Mammary epithelial cell (primary cell): ENCODE measurements at regions of chr16 and their contacts with region 1.

Region 1: DNA sequence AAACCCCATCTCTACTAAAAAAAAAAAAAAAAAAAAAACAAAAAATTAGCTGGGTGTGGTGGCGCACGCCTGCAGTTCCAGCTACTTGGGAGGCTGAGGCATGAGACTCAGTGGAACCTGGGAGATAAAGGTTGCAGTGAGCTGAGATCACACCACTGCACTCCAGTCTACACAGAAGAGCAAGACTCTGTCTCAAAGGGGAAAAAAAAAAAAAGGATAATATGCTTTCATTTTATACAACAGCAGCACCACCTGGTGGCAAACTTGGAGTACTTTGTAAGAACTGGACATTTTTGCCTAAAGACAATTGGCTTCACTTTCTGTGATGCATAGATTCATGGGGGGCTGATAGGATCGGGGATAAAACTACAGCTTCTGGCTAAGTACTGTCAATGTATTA is 8.5 kb downstream of the CHTF8 start:
- DNase-seq: peak; percentile 56
- H3K4me3 ChIP-seq: no peak overlapping the region
- H3K27ac ChIP-seq: no peak overlapping the region
- H3K4me1 ChIP-seq: no peaks in the 10 kb centered on the region
- H3K27me3 ChIP-seq: no peaks in the 10 kb centered on the region
- CTCF ChIP-seq: peak; percentile 42 to 71

Region 2: GRCh38 chr16:68564367-68564985 is 559.4 kb before region 1 on chr16:
- CTCF ChIA-PET with region 1: no interaction called
- dilution Hi-C with region 1: no loop called
- in situ Hi-C with region 1: loop called in 1 of 2 experiments (anchors 25 kb)
- intact Hi-C with region 1: no loop called
- DNase-seq: no peak
- H3K4me3 ChIP-seq: no peak overlapping the region
- H3K27ac ChIP-seq: no peak overlapping the region
- H3K4me1 ChIP-seq: no peaks in the 10 kb centered on the region
- H3K27me3 ChIP-seq: no peaks in the 10 kb centered on the region
- CTCF ChIP-seq: no peak

Region 3: GRCh38 chr16:68704232-68704867 is 419.6 kb before region 1 on chr16:
- CTCF ChIA-PET with region 1: no interaction called
- dilution Hi-C with region 1: no loop called
- in situ Hi-C with region 1: no loop called
- intact Hi-C with region 1: loop called (anchors 5 kb)
- DNase-seq: peak; percentile 83
- H3K4me3 ChIP-seq: no peak overlapping the region
- H3K27ac ChIP-seq: no peak overlapping the region
- H3K4me1 ChIP-seq: peaks cover 22% of the 10 kb centered on the region
- H3K27me3 ChIP-seq: no peaks in the 10 kb centered on the region
- CTCF ChIP-seq: peak; percentile 84 to 92

Region 4: DNA sequence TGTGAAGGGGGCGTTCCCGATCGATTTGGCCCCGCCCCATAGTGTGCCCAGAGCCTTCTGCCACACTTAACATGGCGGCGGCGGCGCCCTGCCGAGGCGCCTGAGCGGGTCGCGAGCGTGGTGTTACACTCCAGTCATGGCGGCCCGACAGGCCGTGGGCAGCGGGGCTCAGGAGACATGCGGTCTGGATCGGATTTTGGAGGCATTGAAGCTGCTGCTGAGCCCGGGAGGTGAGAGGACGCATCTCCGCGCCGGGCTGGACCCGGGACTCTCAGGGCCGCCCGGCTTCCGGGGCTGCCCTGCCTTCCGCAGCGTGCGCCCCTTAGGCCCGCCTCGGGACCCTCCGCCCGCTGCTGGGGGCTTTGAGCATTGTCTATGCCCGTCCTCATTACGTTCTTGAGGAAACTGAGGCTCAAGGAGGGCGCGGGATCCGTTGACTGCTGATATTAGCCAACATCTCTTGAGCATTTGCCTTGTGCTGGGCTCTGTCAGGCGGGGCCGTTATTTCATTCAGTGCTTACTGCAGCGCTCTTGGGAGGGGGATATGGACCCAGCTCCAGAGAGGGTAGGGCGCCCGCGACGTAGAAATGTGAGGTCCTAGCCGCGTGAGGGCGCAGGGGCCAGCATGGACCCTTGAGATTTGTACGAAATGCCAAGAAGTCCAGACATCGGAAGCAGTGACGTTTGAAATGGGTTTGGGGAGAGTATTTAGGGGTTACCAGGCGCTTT is 280.3 kb before region 1 on chr16 and contains the start of gene TANGO6:
- CTCF ChIA-PET with region 1: interaction called, 8 read pairs
- dilution Hi-C with region 1: no loop called
- in situ Hi-C with region 1: loop called in 1 of 2 experiments (anchors 10 kb)
- intact Hi-C with region 1: loop called (anchors 1 kb)
- DNase-seq: peak; percentile 64
- H3K4me3 ChIP-seq: peak within 1 kb of the TSS; percentile 71 to 75 (median 73)
- H3K27ac ChIP-seq: peak within 1 kb of the TSS; percentile 52
- H3K4me1 ChIP-seq: peaks cover 4% of the 10 kb centered on the region
- H3K27me3 ChIP-seq: no peaks in the 10 kb centered on the region
- CTCF ChIP-seq: peak in 1 of 2 donors; percentile 20
- total RNA-seq, gene TANGO6: 18.2 to 24.5 TPM

Region 5: DNA sequence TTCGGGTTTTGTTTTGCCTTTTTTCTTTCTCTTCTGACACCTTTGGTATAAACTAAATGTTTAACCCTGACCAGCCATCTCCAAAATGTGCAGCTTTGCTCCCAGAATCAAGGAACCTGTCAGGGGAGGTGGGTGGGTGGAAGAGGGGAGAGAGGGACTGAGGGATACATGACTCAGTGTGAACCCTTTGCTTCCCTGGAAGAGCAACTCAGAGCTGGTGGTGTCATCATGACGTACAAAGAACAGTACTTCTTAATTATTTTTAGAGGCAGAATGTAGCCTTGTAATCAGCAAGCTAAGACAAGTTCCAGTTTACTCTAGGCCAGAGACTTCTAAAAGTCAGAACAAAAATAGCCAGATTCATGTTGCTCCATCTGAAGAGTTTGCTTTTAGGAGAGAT is 138.1 kb before region 1 on chr16:
- CTCF ChIA-PET with region 1: interaction called, 15 read pairs
- dilution Hi-C with region 1: no loop called
- in situ Hi-C with region 1: no loop called
- intact Hi-C with region 1: no loop called
- DNase-seq: peak; percentile 95
- H3K4me3 ChIP-seq: no peak overlapping the region
- H3K27ac ChIP-seq: peak overlapping the region; percentile 94
- H3K4me1 ChIP-seq: peaks cover 33% of the 10 kb centered on the region
- H3K27me3 ChIP-seq: no peaks in the 10 kb centered on the region
- CTCF ChIP-seq: no peak

Region 6: DNA sequence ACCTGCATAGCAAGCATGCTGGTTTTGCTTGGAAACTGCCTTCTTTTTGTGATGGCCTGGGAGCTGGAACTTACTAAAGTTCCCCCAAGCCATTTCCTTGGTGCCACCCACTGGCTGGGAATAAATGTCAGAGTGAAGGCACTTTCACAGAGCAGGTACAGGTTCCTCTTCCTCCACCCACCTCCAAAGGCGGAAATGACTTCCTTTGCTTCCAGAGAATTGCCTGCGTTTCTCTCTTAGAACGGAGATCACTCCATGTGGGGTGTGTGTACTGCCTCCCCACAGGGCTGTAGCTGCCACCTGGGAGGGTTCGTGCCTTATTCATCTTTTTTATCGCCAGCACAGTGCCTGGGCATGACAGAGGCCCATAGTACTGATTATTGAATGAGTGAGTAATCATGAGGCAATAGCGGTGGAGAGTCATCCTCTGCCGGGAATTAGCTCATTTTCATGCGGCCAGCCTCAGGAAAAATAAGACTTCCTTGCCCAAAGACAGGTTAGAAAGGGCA is 50.7 kb before region 1 on chr16:
- CTCF ChIA-PET with region 1: no interaction called
- dilution Hi-C with region 1: no loop called
- in situ Hi-C with region 1: no loop called
- intact Hi-C with region 1: no loop called
- DNase-seq: peak; percentile 98
- H3K4me3 ChIP-seq: no peak overlapping the region
- H3K27ac ChIP-seq: peak overlapping the region; percentile 79
- H3K4me1 ChIP-seq: peaks cover 35% of the 10 kb centered on the region
- H3K27me3 ChIP-seq: no peaks in the 10 kb centered on the region
- CTCF ChIP-seq: peak in 1 of 2 donors; percentile 7

Region 7: GRCh38 chr16:69089091-69089910 is 34.6 kb before region 1 on chr16:
- CTCF ChIA-PET with region 1: no interaction called
- dilution Hi-C with region 1: loop called (anchors 5 kb)
- in situ Hi-C with region 1: no loop called
- intact Hi-C with region 1: no loop called
- DNase-seq: no peak
- H3K4me3 ChIP-seq: no peak overlapping the region
- H3K27ac ChIP-seq: no peak overlapping the region
- H3K4me1 ChIP-seq: no peaks in the 10 kb centered on the region
- H3K27me3 ChIP-seq: no peaks in the 10 kb centered on the region
- CTCF ChIP-seq: no peak

Region 8: DNA sequence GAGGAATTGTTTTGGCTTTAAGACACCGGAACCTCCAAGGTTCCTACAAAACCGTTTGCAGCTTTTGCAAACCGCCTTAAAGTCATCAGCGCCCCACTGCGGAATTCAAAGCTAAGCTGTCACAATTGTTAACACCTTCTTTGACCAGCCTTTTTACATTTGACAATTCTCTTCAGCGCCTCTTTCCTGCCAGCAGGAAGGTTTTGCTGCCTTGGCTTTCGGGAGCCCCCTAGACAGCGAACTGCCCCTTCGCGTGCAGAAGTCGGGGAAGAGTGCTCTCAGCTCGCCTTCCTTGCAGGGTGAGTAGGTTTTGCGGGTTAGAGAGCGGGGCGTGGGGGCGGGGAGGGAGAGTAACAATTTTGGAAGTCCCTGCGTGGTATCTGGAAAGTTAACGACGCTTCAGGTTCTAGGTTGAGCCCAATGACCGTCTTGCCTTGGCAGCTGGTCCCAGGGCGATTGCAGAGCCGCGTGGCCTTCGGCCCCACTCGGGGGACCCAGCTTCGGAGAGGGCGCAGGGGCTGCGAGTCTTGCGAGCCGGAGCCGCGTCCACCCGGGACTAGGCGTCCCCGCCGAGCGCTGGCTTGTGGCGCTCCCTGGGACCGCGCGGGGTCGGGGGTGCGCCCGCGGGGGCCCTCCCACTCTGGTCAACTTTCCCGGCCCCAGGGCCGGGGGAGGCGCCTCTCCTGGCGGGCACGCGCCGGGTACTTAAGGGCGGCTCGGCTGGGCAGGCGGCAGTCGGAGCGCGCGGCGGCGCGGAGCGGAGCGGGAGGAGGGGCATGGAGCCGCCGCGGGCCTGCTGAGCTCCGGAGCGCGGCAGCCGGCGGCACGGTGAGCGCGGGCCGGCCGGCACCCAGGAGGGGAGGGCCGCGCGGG is 18.2 kb before region 1 on chr16 and contains the start of gene HAS3:
- CTCF ChIA-PET with region 1: no interaction called
- dilution Hi-C with region 1: no loop called
- in situ Hi-C with region 1: no loop called
- intact Hi-C with region 1: loop called (anchors 2 kb)
- DNase-seq: peak; percentile 75
- H3K4me3 ChIP-seq: peak within 1 kb of the TSS; percentile 75 to 88 (median 80)
- H3K27ac ChIP-seq: no peak within 1 kb of the TSS
- H3K4me1 ChIP-seq: peaks cover 48% of the 10 kb centered on the region
- H3K27me3 ChIP-seq: no peaks in the 10 kb centered on the region
- CTCF ChIP-seq: peak; percentile 39 to 75
- total RNA-seq, gene HAS3: 38.2 to 133 TPM

Region 9: DNA sequence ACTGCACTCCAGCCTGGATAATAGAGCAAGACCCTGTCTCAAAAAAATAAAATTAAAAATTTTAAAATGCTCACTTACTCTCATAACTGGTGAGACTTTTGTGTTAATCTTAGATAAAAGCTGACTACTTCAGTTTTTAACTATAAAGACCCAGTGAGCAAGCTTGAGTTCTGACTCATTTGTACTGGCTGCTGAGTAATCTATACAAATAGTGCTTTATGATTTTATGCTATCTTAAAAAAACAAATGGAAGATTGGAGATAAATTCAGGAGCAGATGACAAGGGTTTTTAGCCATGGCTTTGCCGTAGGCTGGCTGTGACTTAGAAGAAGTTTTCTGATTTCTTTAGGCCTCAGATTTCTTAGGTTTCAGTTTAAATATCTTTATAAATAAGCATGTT is 93.5 kb after region 1 on chr16:
- CTCF ChIA-PET with region 1: no interaction called
- dilution Hi-C with region 1: no loop called
- in situ Hi-C with region 1: no loop called
- intact Hi-C with region 1: no loop called
- DNase-seq: peak; percentile 49
- H3K4me3 ChIP-seq: no peak overlapping the region
- H3K27ac ChIP-seq: peak overlapping the region; percentile 4
- H3K4me1 ChIP-seq: peaks cover 25% of the 10 kb centered on the region
- H3K27me3 ChIP-seq: no peaks in the 10 kb centered on the region
- CTCF ChIP-seq: no peak